Activated CD4-positive, alpha-beta T cell treated with anti-CD3 and anti-CD28 coated beads, Interleukin-2, amount 10 ng/mL, durations not matched to agents 24 days and 14 days (primary cell): ENCODE measurements at regions of chr17 and their contacts with region 1.

Region 1: GRCh38 chr17:69327060-69327831 is at the start of gene ABCA5:
- DNase-seq: peak; percentile 96
- H3K4me3 Mint-ChIP-seq: peak within 1 kb of the TSS; percentile 99
- H3K27ac Mint-ChIP-seq: peak within 1 kb of the TSS; percentile 98
- H3K4me1 Mint-ChIP-seq: peaks cover 29% of the 10 kb centered on the region
- H3K27me3 Mint-ChIP-seq: peaks cover 26% of the 10 kb centered on the region
- total RNA-seq, gene ABCA5: 12.0 and 13.3 TPM in 2 replicates

Region 2: GRCh38 chr17:67993596-67994361 is 1333.5 kb before region 1 on chr17:
- intact Hi-C with region 1: loop called (anchors 10 kb)
- DNase-seq: peak; percentile 92
- H3K4me3 Mint-ChIP-seq: peak overlapping the region; percentile 82
- H3K27ac Mint-ChIP-seq: peak overlapping the region; percentile 89
- H3K4me1 Mint-ChIP-seq: peaks cover 35% of the 10 kb centered on the region
- H3K27me3 Mint-ChIP-seq: peaks cover 28% of the 10 kb centered on the region

Region 3: DNA sequence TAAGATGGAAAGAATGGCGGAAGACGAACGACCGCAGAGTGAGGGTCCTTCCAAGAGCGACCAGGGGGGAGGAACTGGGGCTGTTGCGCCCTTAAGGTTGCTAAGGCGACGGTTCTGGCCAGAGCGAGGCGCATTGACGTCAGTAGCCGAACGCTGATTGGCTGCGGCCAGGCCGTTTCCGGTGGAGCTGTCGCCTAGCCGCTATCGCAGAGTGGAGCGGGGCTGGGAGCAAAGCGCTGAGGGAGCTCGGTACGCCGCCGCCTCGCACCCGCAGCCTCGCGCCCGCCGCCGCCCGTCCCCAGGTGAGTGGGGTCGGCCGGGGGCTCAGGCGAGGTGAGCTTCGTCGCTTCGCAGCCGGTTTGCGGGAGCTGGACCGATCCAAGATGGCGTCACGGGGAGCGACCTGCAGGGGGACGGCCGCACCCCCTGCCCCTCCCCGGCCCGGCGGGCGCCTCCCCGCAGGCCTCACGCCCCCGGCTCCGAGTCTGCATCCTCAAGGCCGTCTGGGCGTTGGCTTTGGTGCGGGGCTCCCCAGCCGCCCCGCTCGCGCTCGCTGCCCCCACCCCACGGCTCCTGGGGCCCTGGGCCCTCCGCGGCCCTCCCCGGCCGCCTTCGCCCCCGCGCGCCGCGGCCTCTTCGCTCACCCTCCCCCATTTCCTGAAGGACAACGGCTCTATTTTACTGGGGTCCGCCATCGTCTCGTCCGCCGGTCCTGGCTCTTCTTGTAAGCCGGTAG is 814.8 kb before region 1 on chr17 and contains the start of gene PRKAR1A:
- intact Hi-C with region 1: loop called (anchors 10 kb)
- DNase-seq: peak; percentile 98
- H3K4me3 Mint-ChIP-seq: peak within 1 kb of the TSS; percentile 99
- H3K27ac Mint-ChIP-seq: peak within 1 kb of the TSS; percentile 99
- H3K4me1 Mint-ChIP-seq: peaks cover 61% of the 10 kb centered on the region
- H3K27me3 Mint-ChIP-seq: no peaks in the 10 kb centered on the region
- total RNA-seq, gene PRKAR1A: 194 and 207 TPM in 2 replicates

Region 4: DNA sequence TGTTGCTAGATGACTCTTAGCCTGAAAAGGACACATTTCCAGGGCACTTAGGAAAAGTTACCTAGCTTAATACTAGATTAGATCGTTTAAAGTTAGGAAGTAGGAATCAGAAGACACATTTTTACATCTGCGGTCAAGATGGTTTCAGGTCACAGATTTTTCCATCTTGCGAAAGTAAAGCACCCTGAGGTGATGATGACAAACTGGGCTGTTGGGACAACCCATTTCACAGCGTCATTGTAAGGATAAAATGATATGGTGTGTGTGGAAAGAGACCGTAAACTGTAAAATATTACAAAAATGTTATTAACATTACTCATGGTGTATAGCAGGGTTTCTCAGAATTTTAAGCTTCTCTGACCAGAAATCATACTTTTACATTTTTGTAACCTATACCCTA is 77.1 kb after region 1 on chr17:
- intact Hi-C with region 1: no loop called
- DNase-seq: no peak
- H3K4me3 Mint-ChIP-seq: no peak overlapping the region
- H3K27ac Mint-ChIP-seq: no peak overlapping the region
- H3K4me1 Mint-ChIP-seq: no peaks in the 10 kb centered on the region
- H3K27me3 Mint-ChIP-seq: peaks cover 2% of the 10 kb centered on the region

Region 5: DNA sequence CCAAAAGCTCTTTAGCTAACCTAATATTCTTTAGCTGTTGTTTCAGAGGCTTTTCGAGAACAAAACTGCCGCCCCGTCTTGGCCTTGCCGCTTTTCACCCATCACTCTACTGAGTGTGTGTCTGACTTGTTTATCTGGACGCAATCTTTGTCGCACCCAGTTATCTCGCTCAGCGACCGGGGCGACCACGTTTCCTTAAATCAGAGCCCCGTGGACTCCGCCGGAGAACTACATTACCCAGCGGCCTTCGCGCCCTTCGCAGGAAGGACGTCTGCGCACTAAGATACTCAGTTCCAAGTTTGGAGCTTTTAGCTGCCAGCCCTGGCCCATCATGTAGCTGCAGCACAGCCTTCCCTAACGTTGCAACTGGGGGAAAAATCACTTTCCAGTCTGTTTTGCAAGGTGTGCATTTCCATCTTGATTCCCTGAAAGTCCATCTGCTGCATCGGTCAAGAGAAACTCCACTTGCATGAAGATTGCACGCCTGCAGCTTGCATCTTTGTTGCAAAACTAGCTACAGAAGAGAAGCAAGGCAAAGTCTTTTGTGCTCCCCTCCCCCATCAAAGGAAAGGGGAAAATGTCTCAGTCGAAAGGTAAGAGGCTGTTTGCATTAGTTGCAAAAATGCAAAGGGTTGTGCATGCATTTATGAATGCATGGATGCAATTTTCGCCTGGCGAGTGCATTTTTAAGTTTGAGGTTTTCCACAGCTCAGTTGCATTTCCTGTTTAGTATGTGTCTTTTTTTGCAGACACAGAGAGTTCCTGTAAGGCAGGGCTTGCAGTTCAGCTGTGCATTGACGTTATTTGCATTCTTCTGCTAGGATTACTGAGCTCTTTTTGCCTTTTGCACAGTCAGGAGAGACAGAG is 87.4 kb after region 1 on chr17 and contains the start of gene MAP2K6:
- intact Hi-C with region 1: loop called (anchors 1 kb)
- DNase-seq: peak; percentile 93
- H3K4me3 Mint-ChIP-seq: no peak within 1 kb of the TSS
- H3K27ac Mint-ChIP-seq: no peak within 1 kb of the TSS
- H3K4me1 Mint-ChIP-seq: peaks cover 7% of the 10 kb centered on the region
- H3K27me3 Mint-ChIP-seq: no peaks in the 10 kb centered on the region
- total RNA-seq, gene MAP2K6: 1.4 and 1.8 TPM in 2 replicates